Activated CD4-positive, alpha-beta T cell treated with anti-CD3 and anti-CD28 coated beads for 36 hours (primary cell): ENCODE measurements at regions of chr1 and their contacts with region 1.

Region 1: GRCh38 chr1:6108937-6109614 is 63.4 kb downstream of the KCNAB2 start:
- DNase-seq: peak; percentile 75
- ATAC-seq: peak; percentile 97
- H3K4me3 Mint-ChIP-seq: no peak overlapping the region
- H3K27ac Mint-ChIP-seq: no peak overlapping the region
- H3K4me1 Mint-ChIP-seq: no peaks in the 10 kb centered on the region
- H3K27me3 Mint-ChIP-seq: peaks cover 11% of the 10 kb centered on the region

Region 2: DNA sequence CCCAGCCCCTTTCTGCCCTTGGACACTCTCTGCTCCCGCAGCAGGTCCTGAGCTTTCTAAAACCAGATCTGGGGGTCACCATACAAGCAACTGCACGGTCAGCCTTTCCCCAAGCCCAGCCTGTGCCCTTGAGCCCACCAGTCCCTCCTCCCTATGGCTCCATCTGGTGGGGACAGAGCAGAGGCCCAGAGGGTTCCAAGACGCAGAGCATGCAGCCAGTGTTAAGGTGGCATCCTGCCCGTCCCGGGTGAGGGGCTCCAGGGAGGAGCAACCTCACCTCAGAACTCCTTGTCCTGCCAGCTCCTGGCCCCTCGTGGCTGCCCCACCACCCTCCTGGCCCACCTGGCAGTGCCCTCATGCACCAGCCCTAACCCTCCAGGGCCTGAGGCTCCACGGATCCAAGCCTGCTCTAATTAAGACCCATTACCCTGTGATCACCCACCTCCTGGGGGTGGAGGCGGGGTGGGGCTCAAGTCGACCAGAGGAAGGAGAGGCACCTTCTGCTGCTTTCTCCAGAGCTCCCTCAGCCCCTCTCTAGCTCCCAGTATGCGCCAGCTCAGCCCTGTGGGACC is 62.6 kb after region 1 on chr1:
- CTCF ChIA-PET with region 1: no interaction called
- POLR2A ChIA-PET with region 1: no interaction called
- intact Hi-C with region 1: loop called (anchors 1 kb)
- DNase-seq: no peak
- ATAC-seq: no peak
- H3K4me3 Mint-ChIP-seq: no peak overlapping the region
- H3K27ac Mint-ChIP-seq: no peak overlapping the region
- H3K4me1 Mint-ChIP-seq: no peaks in the 10 kb centered on the region
- H3K27me3 Mint-ChIP-seq: peaks cover 8% of the 10 kb centered on the region

Region 3: GRCh38 chr1:6185635-6186382 is 76.7 kb after region 1 on chr1:
- CTCF ChIA-PET with region 1: interaction called, 3 read pairs
- POLR2A ChIA-PET with region 1: no interaction called
- intact Hi-C with region 1: loop called in 1 of 2 experiments (anchors 1 kb)
- DNase-seq: peak; percentile 52
- ATAC-seq: peak; percentile 59
- H3K4me3 Mint-ChIP-seq: no peak overlapping the region
- H3K27ac Mint-ChIP-seq: peak overlapping the region; percentile 53
- H3K4me1 Mint-ChIP-seq: peaks cover 42% of the 10 kb centered on the region
- H3K27me3 Mint-ChIP-seq: peaks cover 11% of the 10 kb centered on the region

Region 4: GRCh38 chr1:6199298-6200187 is 90.5 kb after region 1 on chr1 and contains the start of gene RPL22:
- CTCF ChIA-PET with region 1: interaction called, 3 read pairs
- POLR2A ChIA-PET with region 1: no interaction called
- intact Hi-C with region 1: loop called in 1 of 2 experiments (anchors 5 kb)
- DNase-seq: peak; percentile 99
- ATAC-seq: peak; percentile 99
- H3K4me3 Mint-ChIP-seq: peak within 1 kb of the TSS; percentile 99
- H3K27ac Mint-ChIP-seq: peak within 1 kb of the TSS; percentile 96
- H3K4me1 Mint-ChIP-seq: peaks cover 39% of the 10 kb centered on the region
- H3K27me3 Mint-ChIP-seq: no peaks in the 10 kb centered on the region
- total RNA-seq, gene RPL22: 392 to 475 TPM